Activated T-helper 1 cell treated with anti-CD3 and anti-CD28 coated beads, Interleukin-12 subunit alpha, Interleukin-12 subunit beta, Interleukin-2, Interleukin-4 antibody, amounts not matched to agents 30 ng/mL and 10 ng/mL and 1 ng/mL, durations not matched to agents 14 hours and 24 hours and 36 hours (primary cell): ENCODE measurements at regions of chr10 and their contacts with region 1.

Region 1: DNA sequence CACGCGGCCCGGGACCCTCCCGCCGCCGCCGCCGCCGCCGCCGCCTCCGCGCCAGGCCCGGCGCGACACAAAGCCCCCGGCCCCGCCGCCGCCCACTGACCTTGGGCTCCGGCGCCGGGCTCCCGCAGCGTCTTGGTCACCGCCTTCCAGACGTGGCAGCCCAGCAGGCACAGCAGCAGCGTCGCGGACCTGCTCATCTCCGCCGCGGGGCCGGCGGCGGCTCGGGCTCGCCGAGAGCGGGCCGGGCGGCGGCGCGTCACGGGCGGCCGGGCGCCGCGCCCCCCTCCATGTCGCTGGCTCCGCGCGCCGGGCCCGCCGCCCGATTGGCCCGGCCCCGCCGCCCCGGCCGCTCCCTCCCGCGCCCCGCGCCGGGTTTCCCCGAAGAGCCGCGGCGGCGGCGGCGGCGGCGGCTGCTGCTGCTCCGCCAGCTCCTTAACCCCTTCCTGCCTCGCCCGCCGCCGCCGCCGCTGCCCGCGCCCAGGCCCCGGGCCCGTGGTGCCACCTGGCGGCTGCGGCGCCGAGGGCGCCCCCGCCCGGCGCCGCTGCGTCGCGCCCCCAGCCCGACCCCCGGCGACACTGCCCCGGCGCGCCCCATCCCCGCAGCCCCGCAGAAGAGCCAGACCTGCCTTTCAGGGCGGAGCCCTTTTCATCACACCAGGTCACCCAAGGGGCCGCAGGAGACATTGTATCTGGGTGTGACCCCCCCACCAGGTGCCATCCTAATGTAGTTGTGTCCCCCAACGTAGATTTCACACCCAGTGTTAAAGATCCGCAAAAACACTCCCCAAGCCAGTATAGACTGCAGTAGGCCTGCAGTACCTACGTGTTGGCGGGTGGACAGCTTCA is at the start of gene FAM171A1:
- DNase-seq: peak; percentile 48
- H3K4me3 Mint-ChIP-seq: peak within 1 kb of the TSS; percentile 82
- H3K27ac Mint-ChIP-seq: peak within 1 kb of the TSS; percentile 9
- H3K4me1 Mint-ChIP-seq: no peaks in the 10 kb centered on the region
- H3K27me3 Mint-ChIP-seq: peaks cover 76% of the 10 kb centered on the region
- total RNA-seq, gene FAM171A1: 0.96 and 1.5 TPM in 2 replicates

Region 2: DNA sequence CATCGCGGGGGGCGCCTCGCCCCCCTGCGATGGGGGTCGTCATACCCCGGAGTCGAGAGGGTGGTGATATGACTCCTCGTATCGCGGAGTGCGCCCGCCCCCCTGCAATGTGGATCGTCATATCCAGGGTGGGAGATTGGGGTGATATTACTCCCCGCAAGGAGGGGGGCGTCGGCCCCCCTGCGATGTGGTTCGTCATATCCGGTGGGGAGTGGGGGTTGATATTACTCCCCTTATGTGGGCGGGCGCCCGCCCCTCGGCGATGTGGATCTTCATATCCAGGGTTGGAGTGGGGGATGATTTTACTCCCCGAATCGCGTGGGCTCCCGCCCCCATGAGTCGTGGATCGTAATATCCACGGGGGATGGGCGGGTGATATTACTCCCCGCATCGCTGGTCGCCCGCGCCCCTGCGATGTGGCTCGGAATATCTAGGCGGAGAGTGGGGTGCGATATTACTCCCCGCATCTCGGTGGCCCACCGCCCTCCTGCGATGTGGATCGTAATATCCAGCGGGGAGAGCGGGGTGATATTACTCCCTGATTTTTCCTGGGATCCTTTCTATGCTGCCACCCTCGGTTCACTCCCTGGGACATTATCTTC is 375.0 kb before region 1 on chr10:
- intact Hi-C with region 1: loop called (anchors 10 kb)
- DNase-seq: no peak
- H3K4me3 Mint-ChIP-seq: no peak overlapping the region
- H3K27ac Mint-ChIP-seq: no peak overlapping the region
- H3K4me1 Mint-ChIP-seq: peaks cover 9% of the 10 kb centered on the region
- H3K27me3 Mint-ChIP-seq: peaks cover 5% of the 10 kb centered on the region

Region 3: DNA sequence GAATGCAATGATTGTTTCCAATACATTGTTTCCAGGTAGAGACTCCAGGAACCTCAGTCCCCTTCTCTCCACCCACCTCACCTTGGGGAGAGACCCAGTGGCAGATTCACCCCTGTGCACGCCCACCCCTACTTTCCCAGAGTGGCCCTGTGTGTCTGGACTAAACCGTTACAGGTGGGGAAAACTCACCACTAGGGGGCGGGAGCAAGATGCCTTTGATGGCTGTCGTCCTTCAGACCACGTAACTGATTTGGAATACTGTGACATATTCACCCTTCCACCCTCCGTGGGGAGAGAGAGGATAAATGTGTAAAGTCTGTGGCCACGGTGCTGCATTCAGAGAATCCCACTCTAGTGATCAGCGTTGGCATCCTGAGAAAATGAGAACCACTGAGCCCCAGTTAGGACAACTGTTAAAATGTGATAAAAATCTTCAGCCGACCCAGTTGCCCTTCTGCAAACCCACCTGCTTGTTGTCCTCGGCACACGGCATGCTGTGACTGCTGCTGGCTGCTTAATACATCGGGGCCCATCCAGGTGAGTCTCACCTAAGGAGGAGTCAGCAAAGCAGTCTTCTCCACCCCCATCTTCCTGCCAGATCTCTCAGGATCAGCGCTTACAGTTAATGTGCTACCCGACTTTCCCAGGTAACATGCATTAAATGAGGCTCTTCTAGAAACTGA is 161.1 kb before region 1 on chr10:
- intact Hi-C with region 1: loop called (anchors 1 kb)
- DNase-seq: peak; percentile 64
- H3K4me3 Mint-ChIP-seq: no peak overlapping the region
- H3K27ac Mint-ChIP-seq: no peak overlapping the region
- H3K4me1 Mint-ChIP-seq: peaks cover 51% of the 10 kb centered on the region
- H3K27me3 Mint-ChIP-seq: no peaks in the 10 kb centered on the region

Region 4: DNA sequence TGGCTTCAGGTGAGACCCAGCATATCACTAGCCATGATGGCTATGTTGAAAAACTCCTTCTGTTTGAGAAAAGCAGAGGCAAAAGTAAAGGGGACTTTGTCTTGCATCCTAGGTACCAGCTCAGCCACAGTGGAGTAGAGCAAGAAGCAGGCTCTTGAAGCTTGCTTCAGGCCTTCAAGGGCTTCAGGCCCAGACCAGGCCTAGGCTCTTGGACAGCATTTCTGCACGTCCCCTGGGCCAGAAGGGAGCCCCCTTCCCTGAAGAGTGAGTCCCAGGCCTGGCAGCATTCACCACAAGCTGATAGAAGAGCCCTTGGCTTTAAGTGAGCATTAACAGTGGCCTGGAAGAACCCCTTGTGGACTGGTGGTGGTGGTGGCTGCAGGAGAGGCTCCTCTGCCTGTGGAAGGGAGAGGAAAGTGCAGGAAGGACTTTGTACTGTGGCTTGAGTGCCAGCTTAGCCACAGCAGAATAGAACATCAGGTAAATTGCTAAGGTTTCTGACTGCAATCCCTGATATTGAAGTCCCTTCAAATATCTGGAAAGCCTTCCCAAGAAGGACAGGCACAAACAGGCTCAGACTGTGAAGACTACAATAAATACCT is 28.1 kb after region 1 on chr10:
- intact Hi-C with region 1: no loop called
- DNase-seq: no peak
- H3K4me3 Mint-ChIP-seq: no peak overlapping the region
- H3K27ac Mint-ChIP-seq: no peak overlapping the region
- H3K4me1 Mint-ChIP-seq: no peaks in the 10 kb centered on the region
- H3K27me3 Mint-ChIP-seq: peaks cover 7% of the 10 kb centered on the region

Region 5: DNA sequence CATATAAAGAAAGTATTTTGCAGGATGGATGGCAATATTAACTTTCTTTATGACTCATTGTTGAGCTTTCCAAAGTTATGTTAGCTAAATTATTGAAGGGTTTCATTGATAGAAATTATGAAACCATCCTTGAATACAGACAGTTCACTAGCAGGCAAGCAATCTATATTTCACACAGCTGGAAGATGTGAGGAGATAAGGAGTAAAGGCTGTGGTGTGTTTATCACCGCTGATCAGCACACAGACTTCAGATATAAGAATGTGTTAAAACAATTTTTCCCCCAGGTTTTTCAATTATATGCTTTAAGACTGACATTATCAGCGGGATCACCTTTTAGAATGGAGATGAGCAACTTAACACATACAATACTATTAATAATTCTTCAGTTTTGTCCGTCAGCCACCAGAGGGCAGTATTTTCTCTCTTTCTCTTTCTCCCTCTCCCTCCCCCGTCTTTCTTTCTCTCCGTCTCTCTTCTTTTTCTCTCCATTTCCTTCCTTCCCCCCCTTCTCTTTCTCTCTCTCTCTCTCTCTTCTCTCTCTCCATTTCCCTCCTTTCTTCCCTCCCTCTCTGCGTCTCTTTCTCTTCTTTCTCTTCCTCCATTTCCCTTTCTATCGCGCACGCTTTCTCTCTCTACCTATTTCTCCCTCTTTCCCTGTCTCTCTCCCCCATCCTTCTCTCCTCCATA is 62.9 kb after region 1 on chr10:
- intact Hi-C with region 1: no loop called
- DNase-seq: no peak
- H3K4me3 Mint-ChIP-seq: peak overlapping the region; percentile 65
- H3K27ac Mint-ChIP-seq: no peak overlapping the region
- H3K4me1 Mint-ChIP-seq: no peaks in the 10 kb centered on the region
- H3K27me3 Mint-ChIP-seq: peaks cover 5% of the 10 kb centered on the region

Region 6: DNA sequence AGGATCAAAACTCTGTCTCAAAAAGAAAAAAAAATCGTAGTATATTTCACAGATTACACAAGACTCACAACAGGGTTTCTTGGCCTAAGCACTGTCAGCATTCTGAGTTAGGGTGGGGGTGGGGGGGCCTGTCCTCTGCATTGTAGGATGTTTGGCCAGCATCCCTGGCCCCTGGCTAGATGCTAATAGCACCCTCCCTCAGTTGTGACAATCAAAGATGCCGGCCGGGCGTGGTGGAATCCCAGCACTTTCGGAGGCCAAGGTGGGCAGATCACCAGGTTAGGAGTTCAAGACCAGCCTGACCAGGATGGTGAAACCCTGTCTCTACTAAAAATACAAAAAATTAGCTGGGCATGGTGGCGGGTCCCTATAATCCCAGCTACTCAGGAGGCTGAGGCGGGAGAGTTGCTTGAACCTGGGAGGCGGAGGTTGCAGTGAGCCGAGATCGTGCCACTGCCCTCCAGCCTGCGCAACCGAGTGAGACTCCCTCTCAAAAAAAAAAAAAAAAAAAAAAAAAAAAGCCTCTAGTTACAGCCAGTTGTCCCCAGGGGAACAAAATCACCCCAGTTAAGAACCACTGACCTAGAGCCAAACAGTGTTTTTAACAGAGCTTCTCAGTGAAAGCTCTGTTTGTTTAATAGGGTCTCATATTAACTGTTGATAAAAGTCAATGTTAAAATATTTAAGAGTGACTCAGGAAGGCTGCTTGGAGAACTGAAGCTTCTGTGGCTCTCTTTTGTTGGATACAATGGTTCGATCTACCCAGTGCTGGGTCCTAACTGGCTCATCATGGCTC is 161.0 kb after region 1 on chr10:
- intact Hi-C with region 1: no loop called
- DNase-seq: no peak
- H3K4me3 Mint-ChIP-seq: no peak overlapping the region
- H3K27ac Mint-ChIP-seq: no peak overlapping the region
- H3K4me1 Mint-ChIP-seq: no peaks in the 10 kb centered on the region
- H3K27me3 Mint-ChIP-seq: no peaks in the 10 kb centered on the region